K562 (cell line): ENCODE measurements at regions of chr1 and their contacts with region 1.

Region 1: DNA sequence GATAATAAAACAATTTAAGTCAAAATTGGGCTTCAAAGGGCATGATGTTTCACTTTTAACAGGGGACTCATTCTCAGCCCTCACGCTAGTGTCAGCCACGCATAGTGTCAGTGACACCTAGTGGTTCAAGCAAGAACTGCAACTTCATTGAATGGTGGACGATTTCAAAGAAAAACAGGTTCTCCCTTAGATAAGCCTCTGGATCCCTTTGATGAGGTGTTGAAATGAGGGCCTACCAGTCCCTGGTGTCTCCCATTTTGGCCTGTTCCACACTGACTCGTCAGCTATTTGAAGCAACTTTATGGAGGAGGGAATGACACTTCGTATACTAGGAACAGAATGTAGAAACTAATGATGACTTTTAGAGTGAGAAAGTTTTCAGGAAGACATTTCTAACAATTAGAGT is 56.2 kb downstream of the FCRL5 start:
- DNase-seq: peak; percentile 49 to 74 (median 56)
- ATAC-seq: peak; percentile 92
- H3K4me3 ChIP-seq: no peak overlapping the region
- H3K27ac ChIP-seq: no peak overlapping the region
- H3K4me1 ChIP-seq: peaks cover 0 to 4% of the 10 kb centered on the region in 2 experiments; a peak in 3 of 5 replicates
- H3K27me3 ChIP-seq: peaks cover 0 to 13% of the 10 kb centered on the region in 2 experiments; a peak in 2 of 5 replicates
- CTCF ChIP-seq: peak; percentile 77 to 86 (median 85)
- EP300 ChIP-seq: no peak
- POLR2A ChIP-seq: no peak
- RAD21 ChIP-seq: peak; percentile 83 to 85

Region 2: GRCh38 chr1:157170677-157171515 is 325.2 kb before region 1 on chr1:
- CTCF ChIA-PET with region 1: interaction called, 7 read pairs
- POLR2A ChIA-PET with region 1: no interaction called
- in situ Hi-C with region 1: loop called (anchors 10 kb)
- intact Hi-C with region 1: loop called (anchors 5 kb)
- DNase-seq: peak; percentile 35 to 71 (median 48)
- ATAC-seq: peak; percentile 62; the same call in 2 of the 3 replicates
- H3K4me3 ChIP-seq: no peak overlapping the region
- H3K27ac ChIP-seq: no peak overlapping the region
- H3K4me1 ChIP-seq: no peaks in the 10 kb centered on the region
- H3K27me3 ChIP-seq: peaks cover 34 to 46% of the 10 kb centered on the region in 2 experiments
- CTCF ChIP-seq: peak; percentile 64 to 76 (median 74)
- EP300 ChIP-seq: no peak
- POLR2A ChIP-seq: no peak
- RAD21 ChIP-seq: peak; percentile 28 to 41; a peak in 3 of 4 replicates

Region 3: GRCh38 chr1:157193702-157194391 is 302.3 kb before region 1 on chr1:
- CTCF ChIA-PET with region 1: interaction called, 37 read pairs
- POLR2A ChIA-PET with region 1: interaction called, 4 read pairs
- in situ Hi-C with region 1: loop called (anchors 5 kb)
- intact Hi-C with region 1: loop called (anchors 2 kb)
- DNase-seq: peak; percentile 72 to 83 (median 75)
- ATAC-seq: peak; percentile 66
- H3K4me3 ChIP-seq: no peak overlapping the region
- H3K27ac ChIP-seq: no peak overlapping the region
- H3K4me1 ChIP-seq: peaks cover 2 to 11% of the 10 kb centered on the region in 2 experiments; a peak in 1 of 5 replicates
- H3K27me3 ChIP-seq: peaks cover 11 to 31% of the 10 kb centered on the region in 2 experiments; a peak in 4 of 5 replicates
- CTCF ChIP-seq: peak; percentile 78 to 90 (median 83)
- EP300 ChIP-seq: no peak
- POLR2A ChIP-seq: no peak
- RAD21 ChIP-seq: peak; percentile 74 to 85

Region 4: GRCh38 chr1:157523774-157524493 is 27.8 kb after region 1 on chr1:
- CTCF ChIA-PET with region 1: no interaction called
- POLR2A ChIA-PET with region 1: no interaction called
- in situ Hi-C with region 1: no loop called
- intact Hi-C with region 1: no loop called
- DNase-seq: no peak
- ATAC-seq: no peak
- H3K4me3 ChIP-seq: no peak overlapping the region
- H3K27ac ChIP-seq: no peak overlapping the region
- H3K4me1 ChIP-seq: peaks cover 0 to 5% of the 10 kb centered on the region in 2 experiments; a peak in 1 of 5 replicates
- H3K27me3 ChIP-seq: peaks cover 28% of the 10 kb centered on the region in 2 experiments
- CTCF ChIP-seq: no peak
- EP300 ChIP-seq: no peak
- POLR2A ChIP-seq: no peak
- RAD21 ChIP-seq: no peak